PC-3 (cell line): ENCODE measurements at regions of chr2 and their contacts with region 1.

Region 1: GRCh38 chr2:227238238-227239237 is 74.1 kb downstream of the COL4A3 start:
- DNase-seq: peak; percentile 79
- ATAC-seq: peak; percentile 67
- H3K4me3 ChIP-seq: no peak overlapping the region
- H3K27ac ChIP-seq: no peak overlapping the region
- H3K4me1 ChIP-seq: no peaks in the 10 kb centered on the region
- H3K27me3 ChIP-seq: peaks cover 7% of the 10 kb centered on the region; the same call in 1 of the 2 replicates
- CTCF ChIP-seq: peak; percentile 97

Region 2: GRCh38 chr2:227324995-227325838 is 86.7 kb after region 1 on chr2 and contains the start of gene MFF:
- CTCF ChIA-PET with region 1: no interaction called
- POLR2A ChIA-PET with region 1: no interaction called
- intact Hi-C with region 1: loop called (anchors 1 kb)
- DNase-seq: peak; percentile 90
- ATAC-seq: peak; percentile 82
- H3K4me3 ChIP-seq: peak within 1 kb of the TSS; percentile 86
- H3K27ac ChIP-seq: peak within 1 kb of the TSS; percentile 59
- H3K4me1 ChIP-seq: peaks cover 31% of the 10 kb centered on the region
- H3K27me3 ChIP-seq: no peaks in the 10 kb centered on the region
- CTCF ChIP-seq: peak; percentile 54; the same call in 1 of the 2 replicates
- total RNA-seq, gene MFF: 85.6 and 103 TPM in 2 replicates